ENCODE measurements at regions of chr1 and their contacts with region 1.

Region 1: GRCh38 chr1:186363891-186364290 is 11.2 kb downstream of the TPR start:
- DNase-seq: no peak
- ATAC-seq: no peak
- H3K4me3 Mint-ChIP-seq: no peak overlapping the region
- H3K27ac Mint-ChIP-seq: no peak overlapping the region
- H3K4me1 Mint-ChIP-seq: peaks cover 6% of the 10 kb centered on the region
- H3K27me3 Mint-ChIP-seq: no peaks in the 10 kb centered on the region

Region 2: GRCh38 chr1:186310307-186310706 is 53.6 kb before region 1 on chr1:
- CTCF ChIA-PET with region 1: interaction called, 3 read pairs
- POLR2A ChIA-PET with region 1: no interaction called
- intact Hi-C with region 1: loop called in 1 of 2 experiments (anchors 5 kb)
- DNase-seq: no peak
- ATAC-seq: no peak
- H3K4me3 Mint-ChIP-seq: no peak overlapping the region
- H3K27ac Mint-ChIP-seq: no peak overlapping the region
- H3K4me1 Mint-ChIP-seq: peaks cover 19% of the 10 kb centered on the region
- H3K27me3 Mint-ChIP-seq: no peaks in the 10 kb centered on the region

Region 3: DNA sequence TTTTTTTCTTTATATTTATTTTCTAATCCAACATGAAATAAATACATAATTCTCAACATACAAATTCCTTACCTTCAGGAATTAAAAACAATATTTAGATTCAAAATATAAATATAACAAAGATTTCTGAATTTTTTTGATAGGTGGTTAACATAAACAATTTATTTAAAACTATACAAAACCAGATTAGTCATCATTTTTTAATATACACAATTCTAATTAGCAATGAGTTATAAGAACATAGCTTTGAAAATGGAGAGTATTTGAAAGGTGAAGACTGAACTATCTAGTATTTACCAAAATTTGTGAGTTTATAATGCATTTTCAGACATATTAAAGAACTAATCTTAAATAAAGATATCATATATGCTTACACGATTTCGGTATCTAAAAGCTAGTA is 26.3 kb before region 1 on chr1:
- CTCF ChIA-PET with region 1: interaction called, 10 read pairs
- POLR2A ChIA-PET with region 1: no interaction called
- intact Hi-C with region 1: loop called in 1 of 2 experiments (anchors 5 kb)
- DNase-seq: no peak
- ATAC-seq: no peak
- H3K4me3 Mint-ChIP-seq: no peak overlapping the region
- H3K27ac Mint-ChIP-seq: no peak overlapping the region
- H3K4me1 Mint-ChIP-seq: no peaks in the 10 kb centered on the region
- H3K27me3 Mint-ChIP-seq: no peaks in the 10 kb centered on the region

Region 4: GRCh38 chr1:186375088-186375953 is 11.4 kb after region 1 on chr1 and contains the starts of genes ODR4 and TPR:
- CTCF ChIA-PET with region 1: interaction called, 18 read pairs
- POLR2A ChIA-PET with region 1: interaction called, 5 read pairs
- intact Hi-C with region 1: no loop called
- DNase-seq: peak; percentile 97
- ATAC-seq: peak; percentile 90
- H3K4me3 Mint-ChIP-seq: peak within 1 kb of the TSS; percentile 98
- H3K27ac Mint-ChIP-seq: peak within 1 kb of the TSS; percentile 98
- H3K4me1 Mint-ChIP-seq: peaks cover 37% of the 10 kb centered on the region
- H3K27me3 Mint-ChIP-seq: no peaks in the 10 kb centered on the region
- total RNA-seq, gene ODR4: 13.1 to 14.0 TPM
- total RNA-seq, gene TPR: 151 to 152 TPM

Region 5: DNA sequence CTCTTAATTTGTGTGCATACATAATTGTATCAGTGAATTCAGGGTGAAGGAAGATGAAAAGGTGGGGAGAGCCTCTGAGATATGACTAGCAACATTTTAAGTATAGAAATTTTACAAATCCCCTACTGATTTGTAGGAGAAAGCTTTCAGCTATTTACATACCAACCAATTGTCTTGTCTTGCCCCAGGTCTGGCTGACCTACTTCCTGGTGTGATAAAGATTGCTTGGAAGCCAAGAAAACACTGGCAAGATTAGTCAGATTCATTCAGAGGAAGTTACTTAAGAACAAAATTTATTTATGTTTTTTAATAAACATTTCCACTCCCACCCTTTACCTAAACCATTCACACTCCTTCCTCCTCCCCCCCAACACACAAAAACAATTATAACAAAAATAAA is 298.8 kb after region 1 on chr1:
- CTCF ChIA-PET with region 1: no interaction called
- POLR2A ChIA-PET with region 1: no interaction called
- intact Hi-C with region 1: no loop called
- DNase-seq: no peak
- ATAC-seq: no peak
- H3K4me3 Mint-ChIP-seq: no peak overlapping the region
- H3K27ac Mint-ChIP-seq: no peak overlapping the region
- H3K4me1 Mint-ChIP-seq: no peaks in the 10 kb centered on the region
- H3K27me3 Mint-ChIP-seq: peaks cover 4% of the 10 kb centered on the region